Posterior vena cava (tissue), 2 donors: ENCODE measurements at regions of chr21 and their contacts with region 1.

Region 1: DNA sequence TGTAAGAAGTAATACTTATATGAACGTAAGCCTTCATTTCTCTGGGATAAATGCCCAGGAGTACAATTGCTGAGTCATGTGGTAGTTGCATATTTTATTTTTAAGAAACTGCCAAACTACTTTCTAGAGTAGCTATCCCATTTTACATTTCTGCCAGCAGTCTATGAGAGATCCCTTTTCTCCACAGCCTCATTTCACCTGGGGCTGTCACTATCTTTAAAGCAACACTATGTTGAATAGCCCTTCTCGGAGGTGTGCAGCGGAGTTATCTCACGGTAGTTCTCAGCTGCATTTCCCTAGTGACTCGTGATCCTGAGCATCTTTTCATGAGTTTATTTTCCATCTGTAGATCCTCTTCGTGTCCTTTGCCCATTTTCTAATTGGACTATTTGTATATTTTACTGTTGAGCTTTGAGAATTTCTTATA is 93.4 kb downstream of the ADARB1 start:
- DNase-seq: no peak

Region 2: GRCh38 chr21:45270306-45270821 is 102.6 kb after region 1 on chr21:
- intact Hi-C with region 1: loop called in 1 of 2 experiments (anchors 10 kb)
- DNase-seq: peak; percentile 67

Region 3: GRCh38 chr21:46454142-46454994 is 1286.6 kb after region 1 on chr21:
- intact Hi-C with region 1: no loop called
- DNase-seq: peak; percentile 19